Naive thymus-derived CD4-positive, alpha-beta T cell (primary cell): ENCODE measurements at regions of chr13 and their contacts with region 1.

Region 1: DNA sequence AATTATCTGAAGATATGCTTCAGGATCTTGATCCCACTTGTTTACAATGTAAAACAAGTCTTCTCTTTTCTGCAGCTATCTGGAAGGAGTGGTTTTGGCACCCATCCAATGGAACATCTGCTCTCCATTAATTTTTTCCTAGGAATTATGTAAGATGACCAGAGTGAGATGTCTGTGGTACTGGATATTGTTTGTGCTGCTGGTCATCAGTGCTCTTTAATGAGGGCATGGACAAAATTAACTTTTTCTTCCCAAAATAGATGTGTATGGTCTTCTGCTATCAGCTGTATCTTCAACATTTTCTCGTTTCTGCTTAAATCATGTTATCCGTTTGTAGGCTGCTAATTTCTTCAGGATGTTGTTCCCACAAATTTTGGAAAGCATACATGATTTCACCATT is 415.4 kb upstream of the KLHL1 start:
- DNase-seq: no peak
- ATAC-seq: no peak
- H3K4me3 ChIP-seq: no peak overlapping the region
- H3K4me3 Mint-ChIP-seq: no peak overlapping the region
- H3K27ac ChIP-seq: no peak overlapping the region
- H3K27ac Mint-ChIP-seq: no peak overlapping the region
- H3K4me1 ChIP-seq: no peaks in the 10 kb centered on the region
- H3K4me1 Mint-ChIP-seq: no peaks in the 10 kb centered on the region
- H3K27me3 ChIP-seq: no peaks in the 10 kb centered on the region
- H3K27me3 Mint-ChIP-seq: no peaks in the 10 kb centered on the region

Region 2: GRCh38 chr13:69935043-69935442 is 588.6 kb before region 1 on chr13:
- CTCF ChIA-PET with region 1: no interaction called
- POLR2A ChIA-PET with region 1: no interaction called
- intact Hi-C with region 1: no loop called
- DNase-seq: no peak
- ATAC-seq: no peak
- H3K4me3 ChIP-seq: no peak overlapping the region
- H3K4me3 Mint-ChIP-seq: no peak overlapping the region
- H3K27ac ChIP-seq: no peak overlapping the region
- H3K27ac Mint-ChIP-seq: no peak overlapping the region
- H3K4me1 ChIP-seq: no peaks in the 10 kb centered on the region
- H3K4me1 Mint-ChIP-seq: no peaks in the 10 kb centered on the region
- H3K27me3 ChIP-seq: no peaks in the 10 kb centered on the region
- H3K27me3 Mint-ChIP-seq: no peaks in the 10 kb centered on the region

Region 3: GRCh38 chr13:70769817-70770216 is 246.2 kb after region 1 on chr13:
- CTCF ChIA-PET with region 1: interaction called, 11 read pairs
- POLR2A ChIA-PET with region 1: no interaction called
- intact Hi-C with region 1: no loop called
- DNase-seq: no peak
- ATAC-seq: no peak
- H3K4me3 ChIP-seq: no peak overlapping the region
- H3K4me3 Mint-ChIP-seq: no peak overlapping the region
- H3K27ac ChIP-seq: no peak overlapping the region
- H3K27ac Mint-ChIP-seq: no peak overlapping the region
- H3K4me1 ChIP-seq: no peaks in the 10 kb centered on the region
- H3K4me1 Mint-ChIP-seq: peaks cover 0 to 2% (median 0%) of the 10 kb centered on the region in 7 donors
- H3K27me3 ChIP-seq: no peaks in the 10 kb centered on the region
- H3K27me3 Mint-ChIP-seq: no peaks in the 10 kb centered on the region